ENCODE measurements at regions of chr22 and their contacts with region 1.

Region 1: GRCh38 chr22:27804470-27805297 is 3.1 kb upstream of the MN1 start:
- DNase-seq: peak; percentile 47 to 67 (median 52)
- ATAC-seq: peak; percentile 94
- H3K4me3 ChIP-seq: no peak overlapping the region
- H3K27ac ChIP-seq: no peak overlapping the region
- H3K4me1 ChIP-seq: peaks cover 0 to 30% of the 10 kb centered on the region in 2 experiments; a peak in 2 of 5 replicates
- H3K27me3 ChIP-seq: peaks cover 2 to 40% of the 10 kb centered on the region in 2 experiments
- CTCF ChIP-seq: peak; percentile 63 to 70 (median 67)
- EP300 ChIP-seq: no peak
- POLR2A ChIP-seq: no peak
- RAD21 ChIP-seq: peak; percentile 59 to 77

Region 2: DNA sequence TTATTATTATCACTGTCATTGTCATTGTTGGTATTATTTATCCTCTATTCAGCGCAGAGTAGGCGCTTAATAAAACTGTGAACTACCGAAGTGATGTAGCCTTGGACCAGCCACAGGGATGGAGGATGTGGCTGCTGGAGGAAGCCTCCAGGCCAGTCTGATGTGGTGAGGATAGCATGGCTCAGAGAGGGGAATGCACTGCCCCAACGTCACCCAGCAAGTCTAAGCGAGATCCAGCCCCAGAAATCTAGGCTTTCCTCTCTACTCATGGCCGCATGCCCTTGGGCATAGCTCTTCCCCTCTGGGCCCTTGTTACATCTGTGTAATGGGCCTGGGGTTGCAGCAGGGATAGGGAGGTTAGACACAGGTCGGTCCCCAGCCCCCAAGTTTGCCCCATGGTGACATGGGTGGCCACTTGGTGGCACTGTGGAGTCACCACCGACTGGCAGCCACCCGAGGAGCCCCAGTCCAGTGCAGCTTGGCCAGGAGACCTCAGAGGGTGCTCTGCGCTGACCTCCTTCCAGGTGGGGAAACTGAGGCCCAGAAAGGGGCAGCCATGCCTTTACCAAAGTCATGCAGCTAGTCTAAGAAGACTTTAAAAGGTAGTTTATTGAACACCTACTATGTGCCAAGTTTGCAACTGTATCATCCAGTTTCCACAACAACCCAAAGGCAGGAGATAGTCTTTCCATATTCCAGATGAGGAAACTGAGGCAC is 398.9 kb before region 1 on chr22:
- CTCF ChIA-PET with region 1: interaction called, 3 read pairs
- POLR2A ChIA-PET with region 1: no interaction called
- in situ Hi-C with region 1: loop called (anchors 25 kb)
- intact Hi-C with region 1: loop called (anchors 10 kb)
- DNase-seq: peak; percentile 43 to 70 (median 66)
- ATAC-seq: peak; percentile 79
- H3K4me3 ChIP-seq: no peak overlapping the region
- H3K27ac ChIP-seq: no peak overlapping the region
- H3K4me1 ChIP-seq: no peaks in the 10 kb centered on the region
- H3K27me3 ChIP-seq: no peaks in the 10 kb centered on the region; a peak in 1 of 5 replicates
- CTCF ChIP-seq: peak; percentile 54 to 73 (median 62)
- EP300 ChIP-seq: no peak
- POLR2A ChIP-seq: no peak
- RAD21 ChIP-seq: peak; percentile 30 to 62

Region 3: GRCh38 chr22:27603800-27604144 is 200.9 kb before region 1 on chr22:
- CTCF ChIA-PET with region 1: interaction called, 5 read pairs
- POLR2A ChIA-PET with region 1: no interaction called
- in situ Hi-C with region 1: no loop called
- intact Hi-C with region 1: loop called (anchors 5 kb)
- DNase-seq: no peak
- ATAC-seq: 0 out of 3 replicates have a peak, but pooled peaks have one; percentile 23
- H3K4me3 ChIP-seq: no peak overlapping the region
- H3K27ac ChIP-seq: no peak overlapping the region
- H3K4me1 ChIP-seq: peaks cover 0 to 5% of the 10 kb centered on the region in 2 experiments; a peak in 3 of 5 replicates
- H3K27me3 ChIP-seq: peaks cover 0 to 20% of the 10 kb centered on the region in 2 experiments; a peak in 2 of 5 replicates
- CTCF ChIP-seq: no peak
- EP300 ChIP-seq: no peak
- POLR2A ChIP-seq: no peak
- RAD21 ChIP-seq: no peak

Region 4: DNA sequence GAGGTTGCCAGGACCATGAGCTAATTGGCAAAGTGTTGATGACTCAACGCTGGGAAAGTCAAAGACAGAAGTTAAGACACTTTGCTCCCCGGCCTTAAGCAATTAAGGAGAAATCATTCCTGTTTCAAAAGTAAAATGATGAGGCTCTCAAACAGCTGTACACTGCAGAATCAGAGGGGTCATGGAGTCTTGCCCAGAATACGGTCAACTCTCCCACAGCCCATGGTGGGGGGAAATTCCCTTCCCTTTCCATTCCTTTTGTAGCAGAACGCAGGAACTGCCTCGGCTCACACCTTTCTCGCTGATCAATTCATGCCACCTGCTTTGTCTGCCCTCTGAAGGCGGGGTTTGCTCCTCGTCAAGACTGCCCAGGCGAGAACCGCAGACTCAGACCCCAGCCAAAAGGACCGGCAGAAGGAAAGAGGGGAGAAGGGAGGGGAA is 55.9 kb before region 1 on chr22:
- CTCF ChIA-PET with region 1: no interaction called
- POLR2A ChIA-PET with region 1: no interaction called
- in situ Hi-C with region 1: no loop called
- intact Hi-C with region 1: no loop called
- DNase-seq: no peak
- ATAC-seq: no peak
- H3K4me3 ChIP-seq: no peak overlapping the region
- H3K27ac ChIP-seq: no peak overlapping the region
- H3K4me1 ChIP-seq: no peaks in the 10 kb centered on the region; a peak in 1 of 5 replicates
- H3K27me3 ChIP-seq: peaks cover 7 to 44% of the 10 kb centered on the region in 2 experiments; a peak in 4 of 5 replicates
- CTCF ChIP-seq: no peak
- EP300 ChIP-seq: no peak
- POLR2A ChIP-seq: no peak
- RAD21 ChIP-seq: no peak